Motor neuron (in vitro differentiated cells): ENCODE measurements at regions of chr15 and their contacts with region 1.

Region 1: GRCh38 chr15:38354315-38354929 is 99.5 kb upstream of the FAM98B start:
- ATAC-seq: peak in 5 of 8 experiments; percentile 45 to 77 (median 70)
- H3K4me3 ChIP-seq: no peak overlapping the region
- H3K27ac ChIP-seq: no peak overlapping the region
- H3K4me1 ChIP-seq: no peaks in the 10 kb centered on the region

Region 2: DNA sequence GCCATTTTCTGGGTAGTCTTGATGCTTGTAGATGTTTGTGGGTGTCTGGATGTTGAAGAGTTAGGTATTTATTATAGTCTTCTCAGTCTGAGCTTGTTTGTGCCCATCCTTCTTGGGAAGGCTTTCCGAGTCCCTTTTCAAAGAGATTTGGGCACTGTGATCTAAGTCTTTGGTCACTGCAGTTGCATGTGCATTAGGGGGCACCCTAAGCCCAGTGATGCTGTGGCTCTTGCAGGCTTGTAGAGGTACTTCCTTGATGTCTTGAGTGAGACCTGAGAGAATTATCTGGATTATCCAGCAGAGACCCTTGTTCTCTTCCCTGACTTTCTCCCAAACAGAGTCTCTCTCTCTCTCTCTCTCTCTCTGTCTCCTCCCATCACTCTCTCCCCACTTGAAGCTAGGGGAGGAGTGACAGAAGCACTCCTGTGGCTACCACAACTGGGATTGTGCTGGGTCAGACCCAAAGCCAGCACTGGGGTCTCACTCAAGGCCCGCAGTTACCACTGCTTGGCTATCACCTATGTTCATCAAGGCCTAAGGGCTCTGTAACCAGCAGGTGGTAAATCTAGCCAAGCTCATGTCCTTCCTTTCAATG is 351.4 kb before region 1 on chr15:
- in situ Hi-C with region 1: loop called in 5 of 9 experiments (anchors 25 kb)
- ATAC-seq: peak in 4 of 8 experiments; percentile 49 to 95 (median 86)
- H3K4me3 ChIP-seq: no peak overlapping the region
- H3K27ac ChIP-seq: no peak overlapping the region
- H3K4me1 ChIP-seq: peaks cover 8 to 11% of the 10 kb centered on the region in 2 donors